ENCODE measurements at regions of chr1 and their contacts with region 1.

Region 1: GRCh38 chr1:160251687-160252526 is 10.4 kb downstream of the DCAF8 start:
- DNase-seq: peak; percentile 68 to 69
- H3K4me3 ChIP-seq: no peak overlapping the region
- H3K4me3 Mint-ChIP-seq: no peak overlapping the region
- H3K27ac Mint-ChIP-seq: peak overlapping the region; percentile 34
- H3K4me1 ChIP-seq: no peaks in the 10 kb centered on the region
- H3K4me1 Mint-ChIP-seq: peaks cover 12% of the 10 kb centered on the region
- H3K27me3 ChIP-seq: no peaks in the 10 kb centered on the region
- H3K27me3 Mint-ChIP-seq: no peaks in the 10 kb centered on the region
- CTCF ChIP-seq: peak; percentile 67 to 77

Region 2: DNA sequence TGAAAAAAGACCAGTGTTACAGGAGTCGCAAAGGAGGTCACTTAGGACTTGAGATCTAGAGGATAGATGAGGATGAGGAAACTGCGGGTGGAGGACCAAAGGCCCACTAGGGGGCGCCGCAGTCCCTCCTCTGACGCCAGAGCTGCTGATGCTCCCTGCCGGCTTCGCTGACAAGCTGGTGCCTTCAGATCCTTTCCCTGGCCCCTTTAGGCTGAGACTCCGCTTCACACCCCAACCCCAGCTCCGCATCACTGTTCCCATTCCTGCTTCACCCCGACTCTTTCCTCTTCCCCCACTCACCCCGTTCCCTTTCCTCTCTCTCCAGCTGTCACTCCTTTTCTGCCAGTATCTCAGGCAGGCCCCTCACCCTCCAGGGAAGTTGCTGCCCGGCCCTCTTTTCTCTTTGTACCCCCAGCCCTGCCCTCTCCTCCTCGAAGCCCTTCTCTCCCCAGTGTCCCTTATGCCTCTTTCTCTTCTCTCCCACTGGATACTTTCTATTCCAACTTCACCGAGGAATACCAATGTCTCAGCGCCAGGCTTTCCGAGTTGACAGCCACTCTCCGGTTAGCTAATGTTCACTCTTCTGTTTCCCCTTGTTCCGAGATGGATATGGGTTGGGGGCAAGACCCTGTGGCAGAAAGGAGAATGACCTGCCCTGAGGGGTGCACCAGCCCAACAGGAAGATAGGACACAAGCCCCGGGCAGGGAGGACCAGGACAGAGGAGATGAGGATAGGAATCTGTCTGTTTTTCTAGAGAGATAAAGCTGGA is 166.0 kb before region 1 on chr1:
- CTCF ChIA-PET with region 1: interaction called, 5 read pairs
- POLR2A ChIA-PET with region 1: no interaction called
- intact Hi-C with region 1: loop called (anchors 1 kb)
- DNase-seq: peak; percentile 72 to 82
- H3K4me3 ChIP-seq: no peak overlapping the region
- H3K4me3 Mint-ChIP-seq: no peak overlapping the region
- H3K27ac Mint-ChIP-seq: no peak overlapping the region
- H3K4me1 ChIP-seq: no peaks in the 10 kb centered on the region
- H3K4me1 Mint-ChIP-seq: peaks cover 7% of the 10 kb centered on the region
- H3K27me3 ChIP-seq: no peaks in the 10 kb centered on the region
- H3K27me3 Mint-ChIP-seq: peaks cover 8% of the 10 kb centered on the region
- CTCF ChIP-seq: peak; percentile 82 to 87

Region 3: DNA sequence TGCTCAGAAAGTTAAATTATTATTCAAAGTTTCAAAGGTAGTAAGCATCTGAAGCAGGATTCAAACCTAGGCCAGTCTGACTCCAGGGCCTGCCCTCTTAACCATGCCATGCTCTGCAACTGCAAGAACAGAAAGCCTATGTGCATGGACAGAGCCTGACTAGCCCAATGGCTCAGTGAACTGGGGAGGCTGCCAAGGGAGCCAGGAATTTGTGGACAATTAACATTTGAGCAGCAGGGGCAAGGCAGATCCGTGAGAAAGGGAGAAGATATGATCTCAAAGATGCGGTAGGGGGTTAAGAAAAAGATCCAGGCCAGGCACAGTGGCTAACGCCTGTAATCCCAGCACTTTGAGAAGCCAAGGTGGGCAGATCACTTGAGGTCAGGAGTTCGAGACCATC is 107.0 kb before region 1 on chr1:
- CTCF ChIA-PET with region 1: no interaction called
- POLR2A ChIA-PET with region 1: no interaction called
- intact Hi-C with region 1: no loop called
- DNase-seq: no peak
- H3K4me3 ChIP-seq: no peak overlapping the region
- H3K4me3 Mint-ChIP-seq: no peak overlapping the region
- H3K27ac Mint-ChIP-seq: no peak overlapping the region
- H3K4me1 ChIP-seq: no peaks in the 10 kb centered on the region
- H3K4me1 Mint-ChIP-seq: no peaks in the 10 kb centered on the region
- H3K27me3 ChIP-seq: no peaks in the 10 kb centered on the region
- H3K27me3 Mint-ChIP-seq: peaks cover 7% of the 10 kb centered on the region
- CTCF ChIP-seq: no peak

Region 4: GRCh38 chr1:160219062-160219929 is 32.6 kb before region 1 on chr1:
- CTCF ChIA-PET with region 1: interaction called, 25 read pairs
- POLR2A ChIA-PET with region 1: interaction called, 6 read pairs
- intact Hi-C with region 1: no loop called
- DNase-seq: peak; percentile 62 to 69
- H3K4me3 ChIP-seq: no peak overlapping the region
- H3K4me3 Mint-ChIP-seq: no peak overlapping the region
- H3K27ac Mint-ChIP-seq: no peak overlapping the region
- H3K4me1 ChIP-seq: 0 out of 2 replicates have a peak, but pooled peaks cover 6% of the 10 kb centered on the region
- H3K4me1 Mint-ChIP-seq: peaks cover 9% of the 10 kb centered on the region
- H3K27me3 ChIP-seq: no peaks in the 10 kb centered on the region
- H3K27me3 Mint-ChIP-seq: no peaks in the 10 kb centered on the region
- CTCF ChIP-seq: peak; percentile 62 to 67

Region 5: DNA sequence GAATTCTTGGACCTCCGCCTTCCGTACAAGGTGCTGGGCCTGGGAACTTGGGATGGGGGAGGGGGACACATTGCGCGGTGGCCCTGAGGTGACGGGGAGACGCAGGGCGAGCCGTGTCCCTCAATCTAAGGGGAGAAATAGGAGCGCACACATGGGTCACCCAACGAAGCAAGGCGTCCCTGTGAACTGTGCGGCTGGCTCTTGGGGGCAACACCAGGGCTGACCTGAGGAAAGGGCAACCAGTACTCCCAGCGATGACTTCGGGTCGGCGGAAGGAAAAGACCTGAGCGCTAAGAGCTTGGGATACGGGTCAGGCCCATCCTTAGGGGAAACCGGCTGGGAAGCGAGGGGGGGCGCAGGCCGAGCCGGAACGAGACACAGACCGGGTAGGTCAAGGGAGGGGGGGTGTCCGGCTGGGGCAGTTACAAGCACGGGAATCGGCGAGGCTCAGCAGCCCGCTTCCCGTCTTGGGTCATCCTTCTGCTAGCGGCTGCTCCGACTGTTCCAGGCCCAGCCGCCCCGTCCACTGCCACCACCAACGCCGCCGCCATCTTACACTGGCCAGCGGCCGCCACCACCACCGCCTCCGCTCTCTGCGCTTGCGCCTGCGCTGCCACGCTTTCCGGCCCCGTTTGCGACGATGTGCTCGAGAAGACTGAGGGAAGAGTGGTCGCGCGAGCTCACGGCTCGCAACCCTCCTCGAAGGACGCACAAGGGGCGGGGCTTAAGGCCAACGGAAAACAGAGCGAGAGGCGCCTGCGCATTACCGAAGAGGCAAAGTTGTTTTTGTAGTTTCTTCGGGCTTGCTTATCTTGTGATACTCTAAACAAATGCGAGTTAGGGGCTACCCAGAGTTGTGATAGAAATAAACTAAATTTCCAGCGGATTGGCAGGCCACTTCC is 10.2 kb after region 1 on chr1 and contains the start of gene DCAF8:
- CTCF ChIA-PET with region 1: interaction called, 33 read pairs
- POLR2A ChIA-PET with region 1: interaction called, 19 read pairs
- intact Hi-C with region 1: no loop called
- DNase-seq: peak; percentile 98
- H3K4me3 ChIP-seq: peak within 1 kb of the TSS; percentile 99
- H3K4me3 Mint-ChIP-seq: peak within 1 kb of the TSS; percentile 92
- H3K27ac Mint-ChIP-seq: peak within 1 kb of the TSS; percentile 97
- H3K4me1 ChIP-seq: no peaks in the 10 kb centered on the region
- H3K4me1 Mint-ChIP-seq: peaks cover 15% of the 10 kb centered on the region
- H3K27me3 ChIP-seq: no peaks in the 10 kb centered on the region
- H3K27me3 Mint-ChIP-seq: no peaks in the 10 kb centered on the region
- CTCF ChIP-seq: no peak
- total RNA-seq, gene DCAF8: 112 and 116 TPM in 2 replicates

Region 6: GRCh38 chr1:160277330-160277729 is 25.4 kb after region 1 on chr1:
- CTCF ChIA-PET with region 1: no interaction called
- POLR2A ChIA-PET with region 1: no interaction called
- intact Hi-C with region 1: no loop called
- DNase-seq: no peak
- H3K4me3 ChIP-seq: no peak overlapping the region
- H3K4me3 Mint-ChIP-seq: no peak overlapping the region
- H3K27ac Mint-ChIP-seq: no peak overlapping the region
- H3K4me1 ChIP-seq: no peaks in the 10 kb centered on the region
- H3K4me1 Mint-ChIP-seq: no peaks in the 10 kb centered on the region
- H3K27me3 ChIP-seq: no peaks in the 10 kb centered on the region
- H3K27me3 Mint-ChIP-seq: no peaks in the 10 kb centered on the region
- CTCF ChIP-seq: no peak

Region 7: DNA sequence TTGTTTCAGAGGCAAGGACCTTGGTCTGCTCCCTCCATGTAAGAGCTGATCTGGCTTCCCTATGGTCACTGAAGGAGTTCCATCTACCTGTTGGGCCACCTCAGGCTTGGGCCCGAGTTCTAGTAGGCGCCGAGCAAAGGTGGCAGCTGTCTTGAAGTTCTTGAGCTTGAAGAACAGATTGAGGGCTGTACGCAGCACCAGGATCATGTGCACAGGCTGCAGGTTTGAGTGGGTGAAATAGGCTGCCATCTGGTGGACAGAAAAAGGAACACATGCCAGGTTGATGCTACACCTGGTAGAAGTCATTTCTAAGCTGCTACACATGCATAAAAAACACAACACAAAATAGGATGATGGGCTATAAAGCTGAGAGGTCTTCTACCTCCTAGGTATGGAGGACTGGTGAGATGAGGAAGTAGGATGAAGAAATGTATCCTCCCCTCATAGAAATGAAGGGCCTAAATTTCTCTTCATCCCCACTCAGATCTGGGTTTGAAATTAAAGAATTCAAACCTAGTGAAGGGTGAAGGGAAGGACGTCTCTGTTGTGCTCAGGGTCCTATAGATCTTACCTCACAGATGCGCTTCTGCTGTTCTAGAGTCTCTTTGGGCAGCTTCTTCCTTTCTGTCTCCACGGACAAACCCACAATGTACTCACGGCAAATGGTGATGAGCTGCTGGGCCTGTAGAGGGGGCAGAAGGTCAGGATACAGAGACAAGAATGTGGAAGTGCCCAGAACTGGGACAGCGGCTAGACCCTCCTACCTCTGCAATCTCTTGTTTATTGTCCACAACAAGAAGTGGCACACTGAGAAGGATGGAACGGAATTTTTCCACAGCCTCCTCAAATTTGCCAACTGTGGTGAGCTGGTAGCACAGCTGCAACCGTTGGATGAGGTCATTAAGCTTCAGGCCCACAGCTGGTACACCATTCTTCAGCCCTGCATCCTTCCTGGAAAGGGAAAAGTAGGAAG is 39.6 kb after region 1 on chr1:
- CTCF ChIA-PET with region 1: interaction called, 27 read pairs
- POLR2A ChIA-PET with region 1: no interaction called
- intact Hi-C with region 1: no loop called
- DNase-seq: peak; percentile 71 to 72
- H3K4me3 ChIP-seq: no peak overlapping the region
- H3K4me3 Mint-ChIP-seq: no peak overlapping the region
- H3K27ac Mint-ChIP-seq: no peak overlapping the region
- H3K4me1 ChIP-seq: no peaks in the 10 kb centered on the region
- H3K4me1 Mint-ChIP-seq: peaks cover 4% of the 10 kb centered on the region
- H3K27me3 ChIP-seq: no peaks in the 10 kb centered on the region
- H3K27me3 Mint-ChIP-seq: no peaks in the 10 kb centered on the region
- CTCF ChIP-seq: peak; percentile 66 to 77

Region 8: DNA sequence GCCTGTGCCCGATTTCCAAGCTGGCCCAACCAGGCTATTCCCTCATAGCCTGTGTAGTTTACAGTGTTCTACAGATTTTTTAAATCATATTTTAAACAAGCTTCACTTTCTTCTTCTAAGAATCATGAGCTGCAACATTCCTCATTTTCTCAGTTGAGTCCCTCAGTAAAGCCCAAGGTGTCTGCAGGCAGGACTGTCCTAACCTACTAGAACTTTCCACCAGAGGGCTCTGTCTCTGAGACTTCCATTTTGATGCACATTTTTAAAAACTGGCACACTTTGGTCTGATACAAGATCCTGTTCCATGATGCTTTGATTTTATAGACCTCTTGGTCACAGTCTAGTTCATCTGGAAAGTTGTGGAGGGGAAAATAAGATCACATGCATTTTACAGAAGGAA is 292.7 kb after region 1 on chr1:
- CTCF ChIA-PET with region 1: no interaction called
- POLR2A ChIA-PET with region 1: no interaction called
- intact Hi-C with region 1: no loop called
- DNase-seq: peak in 1 of 2 experiments; percentile 36
- H3K4me3 ChIP-seq: no peak overlapping the region
- H3K4me3 Mint-ChIP-seq: no peak overlapping the region
- H3K27ac Mint-ChIP-seq: no peak overlapping the region
- H3K4me1 ChIP-seq: peaks cover 25% of the 10 kb centered on the region
- H3K4me1 Mint-ChIP-seq: peaks cover 23% of the 10 kb centered on the region
- H3K27me3 ChIP-seq: no peaks in the 10 kb centered on the region
- H3K27me3 Mint-ChIP-seq: no peaks in the 10 kb centered on the region
- CTCF ChIP-seq: peak; percentile 18 to 37